ENCODE measurements at regions of chr10 and their contacts with region 1.

Region 1: GRCh38 chr10:92573798-92574547 is at the start of gene IDE:
- DNase-seq: peak; percentile 95
- H3K4me3 ChIP-seq: peak within 1 kb of the TSS; percentile 75 to 96
- H3K27ac ChIP-seq: peak within 1 kb of the TSS; percentile 94 to 96
- H3K4me1 ChIP-seq: peaks cover 0 to 8% of the 10 kb centered on the region in 2 experiments; a peak in 2 of 4 replicates
- H3K27me3 ChIP-seq: no peaks in the 10 kb centered on the region
- CTCF ChIP-seq: peak; percentile 78
- EP300 ChIP-seq: peak in 1 of 2 experiments; percentile 10; a peak in 1 of 4 replicates
- RAD21 ChIP-seq: peak; percentile 82
- polyA plus RNA-seq, gene IDE: 9.3 and 11.7 TPM in 2 replicates

Region 2: DNA sequence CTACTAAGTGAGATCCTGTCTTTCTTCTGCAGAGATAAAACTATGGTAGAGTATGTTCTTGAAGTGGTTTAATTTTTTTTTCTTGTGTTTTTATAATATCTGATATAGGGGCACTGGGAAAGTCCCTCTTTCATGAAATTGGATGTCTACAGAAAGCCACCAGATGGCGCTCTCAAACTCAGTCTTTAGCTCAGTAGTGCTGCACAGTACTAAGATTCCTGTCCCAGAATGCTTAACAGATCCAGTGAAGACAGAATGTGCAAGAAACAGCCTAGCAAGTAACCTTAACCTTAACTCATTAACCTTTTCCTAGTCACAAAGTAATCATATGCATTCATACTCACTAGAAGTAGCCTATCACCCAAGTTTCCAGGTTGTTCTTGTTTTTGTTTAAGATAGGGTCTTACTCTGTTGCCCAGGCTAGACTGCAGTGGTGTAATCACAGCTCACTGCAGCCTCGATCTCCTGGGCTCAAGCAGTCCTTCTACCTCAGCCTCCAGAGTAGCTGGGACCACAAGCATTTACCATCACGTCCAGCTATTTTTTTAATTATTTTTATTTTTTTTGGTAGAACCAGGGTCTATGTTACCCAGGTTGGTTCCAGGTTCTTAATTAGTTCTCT is 56.8 kb before region 1 on chr10:
- CTCF ChIA-PET with region 1: interaction called, 93 read pairs
- POLR2A ChIA-PET with region 1: interaction called, 6 read pairs
- DNase-seq: peak; percentile 61
- H3K4me3 ChIP-seq: no peak overlapping the region
- H3K27ac ChIP-seq: no peak overlapping the region
- H3K4me1 ChIP-seq: no peaks in the 10 kb centered on the region
- H3K27me3 ChIP-seq: no peaks in the 10 kb centered on the region
- CTCF ChIP-seq: peak; percentile 90
- EP300 ChIP-seq: no peak
- RAD21 ChIP-seq: peak; percentile 80

Region 3: GRCh38 chr10:92527716-92528115 is 46.3 kb before region 1 on chr10:
- CTCF ChIA-PET with region 1: interaction called, 29 read pairs
- POLR2A ChIA-PET with region 1: no interaction called
- DNase-seq: no peak
- H3K4me3 ChIP-seq: no peak overlapping the region
- H3K27ac ChIP-seq: no peak overlapping the region
- H3K4me1 ChIP-seq: no peaks in the 10 kb centered on the region
- H3K27me3 ChIP-seq: no peaks in the 10 kb centered on the region
- CTCF ChIP-seq: no peak
- EP300 ChIP-seq: no peak
- RAD21 ChIP-seq: no peak

Region 4: DNA sequence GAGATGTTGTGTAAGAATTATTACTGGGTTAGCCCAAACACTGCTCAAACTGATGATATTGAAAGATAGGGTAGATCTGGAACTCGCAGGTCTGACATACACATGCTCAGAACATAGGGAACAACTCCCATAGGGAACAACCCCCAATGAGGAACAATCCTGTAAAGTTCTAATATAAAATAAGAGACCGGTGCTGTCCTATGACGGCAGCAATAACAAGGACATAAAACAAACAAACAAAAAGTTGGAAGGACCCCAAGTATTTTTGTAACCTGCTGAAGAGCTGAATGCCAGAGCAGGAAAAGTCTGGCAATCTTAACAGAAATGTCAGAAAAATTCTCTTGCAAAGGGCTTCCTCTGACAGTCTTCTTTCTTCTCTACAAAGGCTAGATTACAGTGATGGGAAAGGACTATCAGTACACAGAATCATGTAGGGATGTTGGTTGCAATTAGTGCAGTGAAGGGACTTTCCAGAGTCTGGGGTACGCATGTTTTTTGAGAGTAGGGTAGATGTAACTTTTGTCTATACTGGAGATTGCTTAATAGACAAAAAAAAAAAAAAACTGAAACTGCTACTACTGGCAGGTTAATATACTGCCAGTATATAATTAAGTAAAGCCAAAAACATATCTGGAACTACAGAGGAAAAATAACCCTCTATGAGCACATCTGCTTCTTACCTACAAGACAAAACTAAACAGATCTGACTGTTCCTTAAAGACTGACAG is 35.6 kb before region 1 on chr10:
- CTCF ChIA-PET with region 1: interaction called, 20 read pairs
- POLR2A ChIA-PET with region 1: no interaction called
- DNase-seq: no peak
- H3K4me3 ChIP-seq: no peak overlapping the region
- H3K27ac ChIP-seq: no peak overlapping the region
- H3K4me1 ChIP-seq: peaks cover 3 to 5% of the 10 kb centered on the region in 2 experiments; a peak in 2 of 4 replicates
- H3K27me3 ChIP-seq: no peaks in the 10 kb centered on the region
- CTCF ChIP-seq: no peak
- EP300 ChIP-seq: no peak
- RAD21 ChIP-seq: no peak

Region 5: DNA sequence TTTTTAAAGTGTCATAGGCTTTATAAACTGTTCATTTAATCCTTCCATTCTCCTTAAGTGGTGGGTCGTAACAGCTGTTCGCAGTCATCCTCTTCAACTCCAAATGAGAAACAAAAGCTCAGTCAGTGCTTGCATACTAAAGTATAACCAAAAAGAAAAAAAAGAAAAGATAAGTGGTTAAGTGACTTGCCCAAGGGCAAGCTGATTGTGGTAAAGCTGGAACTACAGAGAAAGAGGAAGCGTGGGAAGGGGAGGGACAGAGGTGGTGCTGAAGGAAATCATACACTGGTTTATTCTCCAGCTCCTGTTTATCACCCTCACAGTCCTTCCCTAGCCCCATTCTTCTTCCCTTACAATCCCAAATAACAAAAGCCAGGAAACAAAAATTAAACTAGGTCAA is 29.7 kb before region 1 on chr10:
- CTCF ChIA-PET with region 1: interaction called, 20 read pairs
- POLR2A ChIA-PET with region 1: no interaction called
- DNase-seq: peak; percentile 25
- H3K4me3 ChIP-seq: no peak overlapping the region
- H3K27ac ChIP-seq: no peak overlapping the region
- H3K4me1 ChIP-seq: peaks cover 3 to 10% of the 10 kb centered on the region in 2 experiments; a peak in 3 of 4 replicates
- H3K27me3 ChIP-seq: no peaks in the 10 kb centered on the region
- CTCF ChIP-seq: no peak
- EP300 ChIP-seq: no peak
- RAD21 ChIP-seq: no peak

Region 6: DNA sequence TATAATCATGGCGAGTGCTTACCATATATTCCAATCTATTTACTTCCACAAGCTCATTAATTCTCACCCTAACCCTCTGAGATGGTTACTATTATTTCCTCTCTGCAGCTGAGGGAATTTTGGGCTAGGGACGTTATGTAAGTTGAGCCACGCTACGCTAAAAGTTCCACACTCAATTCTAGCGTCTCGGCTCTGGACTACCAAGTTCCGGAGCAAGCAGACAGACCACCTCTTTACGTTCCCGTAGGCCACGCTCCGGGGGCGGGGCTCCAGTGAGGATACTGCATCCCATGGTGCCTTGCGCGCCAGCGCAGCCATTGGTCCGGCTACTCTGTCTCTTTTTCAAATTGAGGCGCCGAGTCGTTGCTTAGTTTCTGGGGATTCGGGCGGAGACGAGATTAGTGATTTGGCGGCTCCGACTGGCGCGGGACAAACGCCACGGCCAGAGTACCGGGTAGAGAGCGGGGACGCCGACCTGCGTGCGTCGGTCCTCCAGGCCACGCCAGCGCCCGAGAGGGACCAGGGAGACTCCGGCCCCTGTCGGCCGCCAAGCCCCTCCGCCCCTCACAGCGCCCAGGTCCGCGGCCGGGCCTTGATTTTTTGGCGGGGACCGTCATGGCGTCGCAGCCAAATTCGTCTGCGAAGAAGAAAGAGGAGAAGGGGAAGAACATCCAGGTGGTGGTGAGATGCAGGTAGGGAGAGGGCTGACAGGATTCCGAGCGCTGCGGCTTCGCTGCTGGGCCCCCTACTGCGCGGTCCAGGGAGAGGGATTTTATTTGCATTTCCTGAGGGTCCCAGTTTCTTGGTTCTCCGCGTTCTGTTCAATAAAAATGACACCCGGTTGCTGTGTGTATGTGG is 19.0 kb after region 1 on chr10 and contains the start of gene KIF11:
- CTCF ChIA-PET with region 1: interaction called, 28 read pairs
- POLR2A ChIA-PET with region 1: interaction called, 7 read pairs
- DNase-seq: peak; percentile 95
- H3K4me3 ChIP-seq: peak within 1 kb of the TSS; percentile 75 to 87
- H3K27ac ChIP-seq: peak within 1 kb of the TSS; percentile 86 to 88
- H3K4me1 ChIP-seq: peaks cover 0 to 7% of the 10 kb centered on the region in 2 experiments; a peak in 3 of 4 replicates
- H3K27me3 ChIP-seq: no peaks in the 10 kb centered on the region
- CTCF ChIP-seq: peak; percentile 16; the same call in 1 of the 2 replicates
- EP300 ChIP-seq: peak in 1 of 2 experiments; percentile 6; a peak in 1 of 4 replicates
- RAD21 ChIP-seq: no peak
- polyA plus RNA-seq, gene KIF11: 3.8 and 4.0 TPM in 2 replicates

Measured in SK-N-SH (cell line).